Mammary epithelial cell (primary cell): ENCODE measurements at regions of chr1 and their contacts with region 1.

Region 1: GRCh38 chr1:206513312-206514111 is 6.2 kb downstream of the RASSF5 start:
- DNase-seq: peak; percentile 94
- H3K4me3 ChIP-seq: peak overlapping the region in 2 of 3 experiments; percentile 7 to 14
- H3K27ac ChIP-seq: peak overlapping the region; percentile 91
- H3K4me1 ChIP-seq: peaks cover 49% of the 10 kb centered on the region
- H3K27me3 ChIP-seq: no peaks in the 10 kb centered on the region
- CTCF ChIP-seq: no peak

Region 2: GRCh38 chr1:206445116-206445515 is 68.4 kb before region 1 on chr1:
- CTCF ChIA-PET with region 1: no interaction called
- dilution Hi-C with region 1: loop called (anchors 5 kb)
- in situ Hi-C with region 1: no loop called
- intact Hi-C with region 1: no loop called
- DNase-seq: no peak
- H3K4me3 ChIP-seq: no peak overlapping the region
- H3K27ac ChIP-seq: no peak overlapping the region
- H3K4me1 ChIP-seq: peaks cover 22% of the 10 kb centered on the region
- H3K27me3 ChIP-seq: no peaks in the 10 kb centered on the region
- CTCF ChIP-seq: no peak

Region 3: GRCh38 chr1:206455666-206456344 is 57.7 kb before region 1 on chr1:
- CTCF ChIA-PET with region 1: no interaction called
- dilution Hi-C with region 1: no loop called
- in situ Hi-C with region 1: no loop called
- intact Hi-C with region 1: no loop called
- DNase-seq: no peak
- H3K4me3 ChIP-seq: no peak overlapping the region
- H3K27ac ChIP-seq: no peak overlapping the region
- H3K4me1 ChIP-seq: peaks cover 14% of the 10 kb centered on the region
- H3K27me3 ChIP-seq: no peaks in the 10 kb centered on the region
- CTCF ChIP-seq: no peak

Region 4: DNA sequence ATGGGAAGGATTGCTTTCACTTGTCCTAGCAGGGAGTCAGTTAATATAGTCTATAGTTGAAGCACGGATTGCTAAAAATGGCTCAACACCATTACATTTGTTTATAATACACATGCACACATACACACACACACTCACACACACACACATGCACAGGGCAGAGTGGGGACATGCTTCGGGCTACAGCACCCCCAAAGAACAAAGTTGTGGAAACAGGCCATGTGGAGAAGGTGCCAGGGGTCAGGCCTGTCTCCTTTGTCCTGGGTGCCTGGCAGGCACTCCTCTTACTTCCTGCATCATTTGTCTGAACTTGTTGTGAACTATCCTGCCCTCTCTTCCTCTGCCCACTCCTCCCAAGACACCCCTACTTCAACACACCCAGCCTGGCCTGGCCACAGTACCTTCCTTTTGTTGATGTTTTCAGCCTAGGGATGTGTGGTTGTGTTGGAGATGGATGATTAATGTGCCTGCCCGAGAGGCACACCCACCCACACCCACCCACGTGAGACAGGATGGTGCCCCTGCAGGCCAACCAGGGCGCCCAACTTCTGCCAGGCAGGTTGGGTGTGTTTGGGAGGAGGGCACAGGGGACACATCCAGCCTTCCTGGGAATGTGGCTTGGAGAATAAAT is 11.3 kb after region 1 on chr1:
- CTCF ChIA-PET with region 1: no interaction called
- dilution Hi-C with region 1: no loop called
- in situ Hi-C with region 1: no loop called
- intact Hi-C with region 1: loop called (anchors 1 kb)
- DNase-seq: peak; percentile 86
- H3K4me3 ChIP-seq: no peak overlapping the region
- H3K27ac ChIP-seq: peak overlapping the region; percentile 77
- H3K4me1 ChIP-seq: peaks cover 11% of the 10 kb centered on the region
- H3K27me3 ChIP-seq: no peaks in the 10 kb centered on the region
- CTCF ChIP-seq: peak in 1 of 2 donors; percentile 36